ENCODE measurements at regions of chr1 and their contacts with region 1.

Region 1: GRCh38 chr1:60281360-60281932 is 207.9 kb upstream of the C1orf87 start:
- DNase-seq: peak in 4 of 5 donors; percentile 43 to 72 (median 54)
- ATAC-seq: peak; percentile 87 to 97 (median 92)
- H3K4me3 ChIP-seq: no peak overlapping the region
- H3K27ac ChIP-seq: no peak overlapping the region
- H3K4me1 ChIP-seq: peaks cover 0 to 18% (median 8%) of the 10 kb centered on the region in 12 donors
- H3K27me3 ChIP-seq: no peaks in the 10 kb centered on the region
- CTCF ChIP-seq: peak; percentile 80 to 94 (median 90)
- POLR2A ChIP-seq: no peak

Region 2: GRCh38 chr1:59952065-59952464 is 329.4 kb before region 1 on chr1:
- intact Hi-C with region 1: no loop called
- DNase-seq: no peak
- ATAC-seq: no peak
- H3K4me3 ChIP-seq: no peak overlapping the region
- H3K27ac ChIP-seq: no peak overlapping the region
- H3K4me1 ChIP-seq: peaks cover 0 to 2% (median 0%) of the 10 kb centered on the region in 12 donors
- H3K27me3 ChIP-seq: no peaks in the 10 kb centered on the region
- CTCF ChIP-seq: no peak
- POLR2A ChIP-seq: no peak

Region 3: GRCh38 chr1:60848583-60849188 is 567.2 kb after region 1 on chr1:
- intact Hi-C with region 1: loop called in 1 of 10 experiments (anchors 10 kb)
- DNase-seq: no peak
- ATAC-seq: no peak
- H3K4me3 ChIP-seq: no peak overlapping the region
- H3K27ac ChIP-seq: no peak overlapping the region
- H3K4me1 ChIP-seq: peaks cover 0 to under 1% (median 0%) of the 10 kb centered on the region in 12 donors
- H3K27me3 ChIP-seq: no peaks in the 10 kb centered on the region
- CTCF ChIP-seq: peak; percentile 29 to 62 (median 52)
- POLR2A ChIP-seq: no peak

Region 4: GRCh38 chr1:61641578-61642336 is 1360.3 kb after region 1 on chr1:
- intact Hi-C with region 1: loop called in 1 of 10 experiments (anchors 10 kb)
- DNase-seq: peak; percentile 76 to 88 (median 78)
- ATAC-seq: peak; percentile 71 to 90 (median 86)
- H3K4me3 ChIP-seq: peak overlapping the region in 8 of 12 donors; percentile 3 to 50 (median 41)
- H3K27ac ChIP-seq: peak overlapping the region in 11 of 12 donors; percentile 45 to 88 (median 77)
- H3K4me1 ChIP-seq: peaks cover 0 to 41% (median 10%) of the 10 kb centered on the region in 12 donors
- H3K27me3 ChIP-seq: no peaks in the 10 kb centered on the region
- CTCF ChIP-seq: peak; percentile 62 to 89 (median 76)
- POLR2A ChIP-seq: no peak

Region 5: DNA sequence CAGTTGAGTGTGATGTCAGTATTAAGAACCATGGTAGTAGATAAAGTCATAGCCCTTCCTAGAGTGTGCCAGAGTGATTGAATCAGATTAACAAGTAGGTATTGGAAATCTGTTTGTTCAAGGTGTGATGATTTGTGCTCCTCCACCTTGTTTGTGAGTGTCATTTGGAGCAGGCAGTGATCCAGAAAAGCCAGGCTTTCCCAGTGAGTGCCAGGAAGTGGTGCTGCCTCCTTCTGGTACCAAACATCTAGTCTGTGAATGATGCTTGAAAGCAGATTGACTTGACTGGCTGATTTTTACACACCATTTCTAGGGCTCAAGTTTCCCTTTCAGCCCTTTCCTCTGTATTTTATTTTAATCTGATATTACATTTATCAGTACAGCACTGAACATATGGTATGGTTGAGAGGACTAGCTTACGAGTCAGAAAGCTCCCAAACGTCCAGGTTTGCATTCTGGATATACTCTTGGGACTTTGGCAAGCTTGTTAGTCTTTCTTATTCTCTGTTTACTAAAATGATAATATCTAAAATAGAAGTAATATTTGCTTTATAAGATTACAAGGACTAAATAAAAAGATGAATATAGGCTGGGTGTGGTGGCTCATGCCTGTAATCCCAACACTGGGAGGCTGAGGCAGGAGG is 1561.5 kb after region 1 on chr1:
- intact Hi-C with region 1: loop called in 1 of 10 experiments (anchors 10 kb)
- DNase-seq: no peak
- ATAC-seq: no peak
- H3K4me3 ChIP-seq: no peak overlapping the region
- H3K27ac ChIP-seq: no peak overlapping the region
- H3K4me1 ChIP-seq: peaks cover 0 to 14% (median 5%) of the 10 kb centered on the region in 12 donors
- H3K27me3 ChIP-seq: no peaks in the 10 kb centered on the region
- CTCF ChIP-seq: peak in 5 of 12 donors; percentile 12 to 41 (median 18)
- POLR2A ChIP-seq: no peak

Measured in heart left ventricle (tissue), 16 donors.